GM12878 (cell line): ENCODE measurements at regions of chr7 and their contacts with region 1.

Region 1: GRCh38 chr7:156544919-156545723 is 95.5 kb upstream of the RNF32 start:
- DNase-seq: no peak
- ATAC-seq: no peak
- H3K4me3 ChIP-seq: no peak overlapping the region
- H3K27ac ChIP-seq: no peak overlapping the region
- H3K4me1 ChIP-seq: 0 out of 2 replicates have a peak, but pooled peaks cover 3% of the 10 kb centered on the region
- H3K27me3 ChIP-seq: no peaks in the 10 kb centered on the region
- CTCF ChIP-seq: no peak
- EP300 ChIP-seq: no peak
- POLR2A ChIP-seq: no peak
- RAD21 ChIP-seq: no peak

Region 2: DNA sequence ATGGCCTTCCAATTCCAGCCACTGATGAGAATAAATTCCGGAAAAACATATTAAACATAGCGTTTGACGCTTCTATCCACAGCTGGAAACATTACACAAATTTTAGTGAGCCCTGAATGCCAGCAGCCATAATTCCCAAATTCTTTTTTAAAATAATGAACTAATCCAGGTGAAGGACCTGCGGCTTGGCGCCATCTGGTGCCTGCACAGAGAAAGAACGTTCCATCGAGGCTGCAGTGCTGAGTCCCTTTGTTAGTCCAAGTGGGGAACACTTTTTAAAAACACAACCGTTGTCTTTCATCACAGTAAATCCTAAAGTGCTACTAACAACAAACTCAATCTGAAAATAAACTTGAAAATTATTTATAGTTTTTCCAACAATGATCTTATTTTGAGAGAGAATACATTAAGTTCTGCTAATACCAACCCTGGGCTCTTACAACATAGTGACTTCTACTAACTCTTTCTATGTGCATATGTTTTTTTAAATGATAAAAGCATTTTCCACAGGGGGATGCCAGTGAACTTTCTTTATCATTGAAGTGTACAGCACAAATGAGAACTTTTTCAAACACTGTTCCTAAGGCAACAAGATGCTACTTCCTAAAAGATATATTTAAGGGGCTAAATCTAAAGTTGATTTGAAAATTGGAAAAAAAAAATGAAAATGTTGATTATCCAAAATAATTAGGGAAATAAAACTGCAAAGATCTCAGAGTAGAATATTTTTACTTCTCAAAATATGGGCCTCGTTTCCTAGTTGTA is 71.5 kb before region 1 on chr7:
- CTCF ChIA-PET with region 1: no interaction called
- POLR2A ChIA-PET with region 1: no interaction called
- RAD21 ChIA-PET with region 1: interaction called, 5 read pairs
- SMC1A ChIA-PET with region 1: interaction called, 3 read pairs
- in situ Hi-C with region 1: no loop called
- intact Hi-C with region 1: loop called (anchors 2 kb)
- DNase-seq: no peak
- ATAC-seq: peak; percentile 56
- H3K4me3 ChIP-seq: no peak overlapping the region
- H3K27ac ChIP-seq: no peak overlapping the region
- H3K4me1 ChIP-seq: no peaks in the 10 kb centered on the region
- H3K27me3 ChIP-seq: no peaks in the 10 kb centered on the region; a peak in 1 of 4 replicates
- CTCF ChIP-seq: peak; percentile 64 to 69 (median 67); a peak in 5 of 6 replicates
- EP300 ChIP-seq: no peak
- POLR2A ChIP-seq: no peak
- RAD21 ChIP-seq: peak; percentile 71

Region 3: DNA sequence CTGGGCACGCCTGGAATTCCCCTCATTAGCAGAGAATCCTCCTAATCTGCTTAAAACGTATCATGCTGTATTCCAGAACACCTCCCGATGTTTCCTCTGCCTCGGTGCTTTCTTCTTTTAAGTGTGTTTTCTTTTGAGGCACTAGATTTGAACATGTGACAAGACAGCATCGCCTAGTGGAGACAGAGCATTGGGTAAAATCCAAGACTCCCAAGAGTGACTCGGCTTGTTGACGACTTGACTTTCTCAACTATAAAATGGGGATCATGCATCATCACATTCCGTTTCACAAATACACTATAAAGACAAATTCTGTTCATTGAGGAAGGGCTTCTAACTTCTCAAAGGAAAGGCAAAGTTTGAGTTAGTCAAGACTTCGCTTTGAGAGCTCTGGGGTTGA is 10.2 kb before region 1 on chr7:
- CTCF ChIA-PET with region 1: no interaction called
- POLR2A ChIA-PET with region 1: no interaction called
- RAD21 ChIA-PET with region 1: interaction called, 10 read pairs
- SMC1A ChIA-PET with region 1: no interaction called
- in situ Hi-C with region 1: no loop called
- intact Hi-C with region 1: no loop called
- DNase-seq: no peak
- ATAC-seq: no peak
- H3K4me3 ChIP-seq: no peak overlapping the region
- H3K27ac ChIP-seq: no peak overlapping the region
- H3K4me1 ChIP-seq: no peaks in the 10 kb centered on the region
- H3K27me3 ChIP-seq: no peaks in the 10 kb centered on the region; a peak in 1 of 4 replicates
- CTCF ChIP-seq: no peak
- EP300 ChIP-seq: no peak
- POLR2A ChIP-seq: no peak
- RAD21 ChIP-seq: no peak

Region 4: GRCh38 chr7:156566812-156567549 is 21.9 kb after region 1 on chr7:
- CTCF ChIA-PET with region 1: no interaction called
- POLR2A ChIA-PET with region 1: no interaction called
- RAD21 ChIA-PET with region 1: no interaction called
- SMC1A ChIA-PET with region 1: no interaction called
- in situ Hi-C with region 1: no loop called
- intact Hi-C with region 1: no loop called
- DNase-seq: no peak
- ATAC-seq: no peak
- H3K4me3 ChIP-seq: no peak overlapping the region
- H3K27ac ChIP-seq: no peak overlapping the region
- H3K4me1 ChIP-seq: no peaks in the 10 kb centered on the region
- H3K27me3 ChIP-seq: no peaks in the 10 kb centered on the region
- CTCF ChIP-seq: no peak
- EP300 ChIP-seq: no peak
- POLR2A ChIP-seq: no peak
- RAD21 ChIP-seq: no peak

Region 5: DNA sequence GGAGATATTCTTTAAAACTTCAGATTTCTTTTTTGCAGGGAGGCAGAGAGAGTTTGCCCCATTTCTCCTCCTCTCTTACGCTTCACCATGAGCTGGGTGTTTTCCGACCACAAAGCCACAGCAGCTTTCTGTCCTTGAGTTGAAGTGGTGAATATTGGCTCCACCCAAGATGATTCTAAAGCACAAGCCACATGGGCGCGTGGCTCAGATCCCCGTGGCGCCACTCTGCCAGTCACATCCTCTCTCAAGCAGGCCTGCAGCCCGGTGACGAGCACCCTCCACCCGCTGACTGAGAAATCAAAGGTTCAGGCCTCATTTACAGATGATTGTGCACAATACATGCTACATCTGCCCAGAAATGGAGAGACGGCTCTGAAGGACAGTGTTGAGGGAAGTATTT is 67.8 kb after region 1 on chr7:
- CTCF ChIA-PET with region 1: no interaction called
- POLR2A ChIA-PET with region 1: no interaction called
- RAD21 ChIA-PET with region 1: no interaction called
- SMC1A ChIA-PET with region 1: interaction called, 4 read pairs
- in situ Hi-C with region 1: no loop called
- intact Hi-C with region 1: loop called (anchors 5 kb)
- DNase-seq: peak; percentile 55
- ATAC-seq: peak; percentile 86
- H3K4me3 ChIP-seq: no peak overlapping the region
- H3K27ac ChIP-seq: no peak overlapping the region
- H3K4me1 ChIP-seq: peaks cover 3% of the 10 kb centered on the region
- H3K27me3 ChIP-seq: no peaks in the 10 kb centered on the region
- CTCF ChIP-seq: no peak
- EP300 ChIP-seq: no peak
- POLR2A ChIP-seq: no peak
- RAD21 ChIP-seq: no peak